Activated CD4-positive, alpha-beta T cell treated with anti-CD3 and anti-CD28 coated beads, Interleukin-2, amount 10 ng/mL, durations not matched to agents 24 days and 14 days (primary cell): ENCODE measurements at regions of chr10 and their contacts with region 1.

Region 1: GRCh38 chr10:33008499-33009243 is 50.6 kb upstream of the ITGB1 start:
- DNase-seq: peak; percentile 88
- H3K4me3 Mint-ChIP-seq: peak overlapping the region; percentile 79
- H3K27ac Mint-ChIP-seq: peak overlapping the region; percentile 45
- H3K4me1 Mint-ChIP-seq: peaks cover 19% of the 10 kb centered on the region
- H3K27me3 Mint-ChIP-seq: peaks cover 11% of the 10 kb centered on the region

Region 2: DNA sequence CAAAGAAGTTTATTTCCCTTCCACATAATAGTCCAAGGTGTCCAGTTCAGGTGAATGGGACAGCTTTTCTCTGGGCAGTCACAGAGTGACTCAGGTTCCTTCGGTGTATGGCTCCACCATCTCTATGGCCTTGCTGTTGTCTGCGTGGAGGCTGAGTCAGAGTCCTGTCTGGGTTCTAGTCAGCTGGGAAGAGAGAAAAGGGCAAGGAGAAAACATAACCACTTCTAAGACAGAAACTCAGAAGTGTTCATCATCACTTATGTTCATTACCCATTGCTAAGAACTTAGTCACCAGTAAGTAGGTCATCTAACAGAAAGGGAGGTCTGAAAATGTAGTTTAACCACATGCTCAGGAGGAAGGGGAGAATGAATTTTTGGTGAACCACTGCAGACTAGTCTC is 595.2 kb before region 1 on chr10:
- intact Hi-C with region 1: loop called (anchors 1 kb)
- DNase-seq: no peak
- H3K4me3 Mint-ChIP-seq: no peak overlapping the region
- H3K27ac Mint-ChIP-seq: peak overlapping the region; percentile 1
- H3K4me1 Mint-ChIP-seq: peaks cover 6% of the 10 kb centered on the region
- H3K27me3 Mint-ChIP-seq: no peaks in the 10 kb centered on the region

Region 3: DNA sequence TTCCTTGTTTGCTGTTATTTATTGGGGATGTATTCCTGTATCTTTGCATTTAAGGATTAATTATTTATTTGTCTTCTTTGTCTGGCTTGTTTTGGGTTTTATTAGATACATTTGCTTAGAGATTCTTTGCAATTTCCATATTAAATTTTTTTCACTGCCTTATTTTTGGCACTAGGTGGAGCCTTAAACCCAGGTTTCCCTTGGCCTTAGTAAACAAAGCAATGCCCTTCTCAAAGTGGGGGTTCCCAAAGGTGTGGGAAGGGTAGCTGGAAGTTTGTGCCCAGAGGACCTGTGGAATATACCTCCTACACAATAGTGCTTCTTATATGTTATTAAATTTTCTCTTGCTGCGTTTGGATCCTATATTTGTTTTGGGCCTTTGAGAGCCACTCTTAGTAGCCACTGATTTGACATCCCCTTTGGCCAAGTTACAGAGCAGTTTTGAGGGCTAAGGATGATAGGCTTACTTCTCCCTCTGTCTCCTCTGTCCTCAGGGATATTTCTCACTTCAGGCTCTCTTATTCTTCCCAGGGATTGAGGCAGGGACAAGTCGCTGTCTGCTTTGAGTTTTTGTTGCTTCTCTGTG is 213.0 kb before region 1 on chr10:
- intact Hi-C with region 1: loop called (anchors 1 kb)
- DNase-seq: peak; percentile 67
- H3K4me3 Mint-ChIP-seq: no peak overlapping the region
- H3K27ac Mint-ChIP-seq: no peak overlapping the region
- H3K4me1 Mint-ChIP-seq: no peaks in the 10 kb centered on the region
- H3K27me3 Mint-ChIP-seq: peaks cover 5% of the 10 kb centered on the region

Region 4: DNA sequence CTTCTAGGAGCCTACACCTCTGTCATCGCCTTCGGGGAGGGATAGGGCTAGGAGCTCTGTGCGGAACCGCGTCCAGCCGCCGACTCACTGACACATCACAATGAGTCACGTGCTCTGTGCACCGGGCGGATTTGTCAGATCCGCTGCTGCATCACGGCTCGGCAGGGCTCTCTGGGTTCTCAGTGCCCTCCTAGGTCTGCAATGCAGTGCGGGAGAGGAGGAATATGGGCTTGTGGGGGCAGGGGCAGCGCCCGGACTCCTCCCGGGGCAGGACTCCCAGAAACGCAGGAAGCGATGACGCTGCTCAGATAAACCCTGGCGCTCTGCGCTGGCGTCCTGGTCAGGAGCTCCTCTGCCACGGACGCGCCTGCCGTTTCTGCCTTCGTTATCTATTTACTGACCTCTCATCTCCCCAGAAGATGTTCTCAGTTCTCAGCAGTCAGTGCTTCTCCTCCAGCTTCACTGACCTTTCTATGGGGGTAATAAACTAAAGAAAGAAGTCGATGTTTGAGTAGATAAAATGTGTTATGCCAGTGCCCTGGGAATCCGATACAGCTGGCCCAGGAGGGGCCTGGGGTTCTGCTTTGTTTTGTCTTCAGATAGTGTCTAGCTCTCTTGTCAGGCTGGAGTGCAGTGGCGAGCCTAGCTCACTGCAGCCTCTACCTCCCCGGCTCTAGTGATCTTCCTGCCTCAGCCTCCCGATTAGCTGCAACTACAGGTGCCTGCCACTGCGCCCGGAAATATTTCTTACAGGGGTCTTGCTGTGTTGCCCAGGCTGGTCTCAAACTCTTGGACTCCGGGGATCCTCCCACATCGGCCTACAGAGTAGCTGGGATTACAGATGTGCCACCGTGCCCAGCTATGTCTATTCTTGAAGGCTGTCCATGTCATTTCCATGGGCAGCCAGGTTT is 27.9 kb before region 1 on chr10:
- intact Hi-C with region 1: loop called (anchors 2 kb)
- DNase-seq: peak; percentile 92
- H3K4me3 Mint-ChIP-seq: peak overlapping the region; percentile 90
- H3K27ac Mint-ChIP-seq: peak overlapping the region; percentile 87
- H3K4me1 Mint-ChIP-seq: peaks cover 20% of the 10 kb centered on the region
- H3K27me3 Mint-ChIP-seq: peaks cover 2% of the 10 kb centered on the region

Region 5: GRCh38 chr10:33032654-33033151 is 24.0 kb after region 1 on chr10:
- intact Hi-C with region 1: no loop called
- DNase-seq: no peak
- H3K4me3 Mint-ChIP-seq: no peak overlapping the region
- H3K27ac Mint-ChIP-seq: no peak overlapping the region
- H3K4me1 Mint-ChIP-seq: peaks cover 7% of the 10 kb centered on the region
- H3K27me3 Mint-ChIP-seq: peaks cover 14% of the 10 kb centered on the region